ENCODE measurements at regions of chr12 and their contacts with region 1.

Region 1: GRCh38 chr12:43167691-43168090 is 384.3 kb downstream of the ADAMTS20 start:
- DNase-seq: no peak
- ATAC-seq: no peak
- H3K4me3 ChIP-seq: no peak overlapping the region
- H3K27ac ChIP-seq: no peak overlapping the region
- H3K4me1 ChIP-seq: peaks cover 10% of the 10 kb centered on the region; the same call in 1 of the 2 replicates
- H3K27me3 ChIP-seq: no peaks in the 10 kb centered on the region
- CTCF ChIP-seq: no peak

Region 2: GRCh38 chr12:42482445-42483237 is 685.0 kb before region 1 on chr12:
- CTCF ChIA-PET with region 1: no interaction called
- POLR2A ChIA-PET with region 1: no interaction called
- intact Hi-C with region 1: loop called (anchors 10 kb)
- DNase-seq: peak; percentile 73
- ATAC-seq: peak; percentile 82
- H3K4me3 ChIP-seq: peak overlapping the region; percentile 78
- H3K27ac ChIP-seq: peak overlapping the region; percentile 54
- H3K4me1 ChIP-seq: peaks cover 18% of the 10 kb centered on the region; the same call in 1 of the 2 replicates
- H3K27me3 ChIP-seq: no peaks in the 10 kb centered on the region
- CTCF ChIP-seq: peak; percentile 94

Region 3: GRCh38 chr12:42996869-42997431 is 170.7 kb before region 1 on chr12:
- CTCF ChIA-PET with region 1: no interaction called
- POLR2A ChIA-PET with region 1: no interaction called
- intact Hi-C with region 1: loop called (anchors 2 kb)
- DNase-seq: peak; percentile 31
- ATAC-seq: peak; percentile 73
- H3K4me3 ChIP-seq: no peak overlapping the region
- H3K27ac ChIP-seq: peak overlapping the region; percentile 37
- H3K4me1 ChIP-seq: peaks cover 17% of the 10 kb centered on the region
- H3K27me3 ChIP-seq: no peaks in the 10 kb centered on the region
- CTCF ChIP-seq: no peak

Region 4: GRCh38 chr12:43198608-43199007 is 30.9 kb after region 1 on chr12:
- CTCF ChIA-PET with region 1: no interaction called
- POLR2A ChIA-PET with region 1: no interaction called
- intact Hi-C with region 1: loop called (anchors 2 kb)
- DNase-seq: no peak
- ATAC-seq: no peak
- H3K4me3 ChIP-seq: no peak overlapping the region
- H3K27ac ChIP-seq: no peak overlapping the region
- H3K4me1 ChIP-seq: no peaks in the 10 kb centered on the region
- H3K27me3 ChIP-seq: no peaks in the 10 kb centered on the region
- CTCF ChIP-seq: no peak

Measured in PC-3 (cell line).